ENCODE measurements at regions of chr2 and their contacts with region 1.

Region 1: DNA sequence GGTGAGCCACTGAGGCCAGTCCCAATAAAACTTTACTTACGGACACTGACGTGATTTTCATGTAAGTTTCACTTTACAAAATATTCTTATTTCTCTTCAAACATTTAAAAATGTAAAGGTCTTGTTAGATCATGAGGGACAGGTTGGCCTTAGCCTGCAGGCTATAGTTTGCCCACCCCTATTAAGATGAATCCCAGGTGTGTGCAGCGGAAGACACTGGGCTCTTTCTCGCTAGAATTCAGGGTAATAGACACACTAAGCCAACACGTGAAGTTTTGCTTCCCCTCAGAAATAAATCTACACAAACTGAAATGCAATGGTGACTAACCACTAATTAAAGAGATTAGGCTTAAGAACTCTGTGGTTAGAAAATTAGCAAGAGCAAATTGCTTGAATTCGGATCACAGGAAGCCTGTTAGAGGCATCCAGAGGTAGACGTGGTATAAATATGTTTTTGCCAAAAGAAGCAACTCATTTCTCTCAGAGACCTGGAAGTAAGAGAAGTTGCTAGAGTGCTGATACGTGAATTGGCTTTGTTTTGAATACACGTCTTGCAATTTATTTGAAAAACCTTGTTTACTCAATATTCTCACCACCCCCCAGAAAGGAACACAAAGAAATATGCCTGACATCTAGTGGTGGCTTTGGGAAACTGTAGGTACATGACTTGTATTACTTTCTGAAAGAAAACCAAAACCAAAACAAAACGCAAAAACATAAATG is 151.6 kb downstream of the DTNB start:
- DNase-seq: peak; percentile 89
- H3K4me3 ChIP-seq: peak overlapping the region; percentile 42
- H3K27ac ChIP-seq: peak overlapping the region; percentile 56
- H3K4me1 ChIP-seq: peaks cover 38% of the 10 kb centered on the region
- CTCF ChIP-seq: peak; percentile 99

Region 2: GRCh38 chr2:25276569-25277465 is 245.0 kb before region 1 on chr2:
- CTCF ChIA-PET with region 1: no interaction called
- POLR2A ChIA-PET with region 1: no interaction called
- intact Hi-C with region 1: no loop called
- DNase-seq: peak; percentile 38
- H3K4me3 ChIP-seq: no peak overlapping the region
- H3K27ac ChIP-seq: no peak overlapping the region
- H3K4me1 ChIP-seq: peaks cover 22% of the 10 kb centered on the region
- CTCF ChIP-seq: peak; percentile 84

Region 3: GRCh38 chr2:25309402-25309801 is 212.4 kb before region 1 on chr2:
- CTCF ChIA-PET with region 1: no interaction called
- POLR2A ChIA-PET with region 1: no interaction called
- intact Hi-C with region 1: loop called (anchors 1 kb)
- DNase-seq: peak; percentile 77
- H3K4me3 ChIP-seq: no peak overlapping the region
- H3K27ac ChIP-seq: no peak overlapping the region
- H3K4me1 ChIP-seq: peaks cover 6% of the 10 kb centered on the region
- CTCF ChIP-seq: peak; percentile 80

Region 4: GRCh38 chr2:25362049-25362433 is 159.8 kb before region 1 on chr2:
- CTCF ChIA-PET with region 1: no interaction called
- POLR2A ChIA-PET with region 1: interaction called, 4 read pairs
- intact Hi-C with region 1: loop called (anchors 1 kb)
- DNase-seq: peak; percentile 93
- H3K4me3 ChIP-seq: peak overlapping the region; percentile 66
- H3K27ac ChIP-seq: peak overlapping the region; percentile 66
- H3K4me1 ChIP-seq: peaks cover 23% of the 10 kb centered on the region
- CTCF ChIP-seq: peak; percentile 95

Region 5: DNA sequence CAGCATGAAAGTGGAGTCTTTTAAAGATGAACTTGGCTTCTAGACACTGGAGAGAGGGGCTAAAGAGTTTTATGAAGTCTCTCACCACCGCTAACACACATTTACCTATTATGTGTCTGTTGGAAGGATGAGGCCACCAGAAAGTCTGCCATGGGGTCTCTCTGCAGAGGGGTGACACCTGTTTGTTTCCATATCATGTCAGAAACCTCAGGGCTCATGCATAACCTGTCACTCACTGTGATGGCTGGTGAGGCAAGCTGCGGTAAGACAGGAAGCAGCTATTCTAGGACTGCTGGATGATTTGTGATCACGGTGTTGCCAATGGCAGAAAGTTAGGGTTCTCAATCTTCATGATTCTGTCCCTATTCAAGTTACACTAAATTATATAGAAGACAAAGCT is 119.3 kb before region 1 on chr2:
- CTCF ChIA-PET with region 1: no interaction called
- POLR2A ChIA-PET with region 1: interaction called, 4 read pairs
- intact Hi-C with region 1: loop called (anchors 2 kb)
- DNase-seq: peak; percentile 96
- H3K4me3 ChIP-seq: peak overlapping the region; percentile 39
- H3K27ac ChIP-seq: peak overlapping the region; percentile 97
- H3K4me1 ChIP-seq: peaks cover 99% of the 10 kb centered on the region
- CTCF ChIP-seq: no peak

Region 6: GRCh38 chr2:25483601-25484266 is 38.1 kb before region 1 on chr2:
- CTCF ChIA-PET with region 1: no interaction called
- POLR2A ChIA-PET with region 1: no interaction called
- intact Hi-C with region 1: loop called (anchors 5 kb)
- DNase-seq: peak; percentile 79
- H3K4me3 ChIP-seq: peak overlapping the region; percentile 12
- H3K27ac ChIP-seq: peak overlapping the region; percentile 69
- H3K4me1 ChIP-seq: peaks cover 45% of the 10 kb centered on the region
- CTCF ChIP-seq: no peak

Region 7: DNA sequence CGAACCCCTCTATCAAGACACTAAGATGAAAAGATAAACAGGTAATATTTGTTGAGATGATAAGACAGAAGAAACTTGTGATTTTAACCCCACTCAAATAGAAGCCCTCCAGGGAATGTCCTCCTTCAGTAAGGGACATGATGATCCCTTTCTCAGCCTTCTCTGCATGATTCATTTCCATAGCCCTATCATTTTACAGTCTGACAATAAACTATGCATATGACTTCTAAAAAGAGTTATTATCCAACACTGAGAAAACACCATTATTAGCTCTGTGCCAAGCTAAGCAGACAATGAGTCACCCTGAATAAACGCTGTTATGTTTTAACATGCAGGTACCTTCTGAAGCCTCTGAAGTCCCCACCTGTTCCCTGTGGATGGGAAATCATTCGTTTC is 96.8 kb after region 1 on chr2:
- CTCF ChIA-PET with region 1: no interaction called
- POLR2A ChIA-PET with region 1: no interaction called
- intact Hi-C with region 1: no loop called
- DNase-seq: no peak
- H3K4me3 ChIP-seq: no peak overlapping the region
- H3K27ac ChIP-seq: no peak overlapping the region
- H3K4me1 ChIP-seq: no peaks in the 10 kb centered on the region
- CTCF ChIP-seq: no peak

Region 8: GRCh38 chr2:25772078-25772477 is 250.3 kb after region 1 on chr2:
- CTCF ChIA-PET with region 1: no interaction called
- POLR2A ChIA-PET with region 1: no interaction called
- intact Hi-C with region 1: no loop called
- DNase-seq: no peak
- H3K4me3 ChIP-seq: no peak overlapping the region
- H3K27ac ChIP-seq: no peak overlapping the region
- H3K4me1 ChIP-seq: no peaks in the 10 kb centered on the region
- CTCF ChIP-seq: no peak

Measured in OCI-LY7 (cell line).